Activated CD8-positive, alpha-beta T cell treated with anti-CD3 and anti-CD28 coated beads, Interleukin-2, amount 10 ng/mL, durations not matched to agents 7 days and 5 days (primary cell): ENCODE measurements at regions of chr1 and their contacts with region 1.

Region 1: GRCh38 chr1:156500797-156501499 is 373 bp upstream of the MEF2D start:
- DNase-seq: peak; percentile 95
- ATAC-seq: peak; percentile 73
- H3K4me3 Mint-ChIP-seq: peak overlapping the region; percentile 87
- H3K27ac Mint-ChIP-seq: peak overlapping the region; percentile 99
- H3K4me1 Mint-ChIP-seq: peaks cover 76% of the 10 kb centered on the region
- H3K27me3 Mint-ChIP-seq: no peaks in the 10 kb centered on the region

Region 2: DNA sequence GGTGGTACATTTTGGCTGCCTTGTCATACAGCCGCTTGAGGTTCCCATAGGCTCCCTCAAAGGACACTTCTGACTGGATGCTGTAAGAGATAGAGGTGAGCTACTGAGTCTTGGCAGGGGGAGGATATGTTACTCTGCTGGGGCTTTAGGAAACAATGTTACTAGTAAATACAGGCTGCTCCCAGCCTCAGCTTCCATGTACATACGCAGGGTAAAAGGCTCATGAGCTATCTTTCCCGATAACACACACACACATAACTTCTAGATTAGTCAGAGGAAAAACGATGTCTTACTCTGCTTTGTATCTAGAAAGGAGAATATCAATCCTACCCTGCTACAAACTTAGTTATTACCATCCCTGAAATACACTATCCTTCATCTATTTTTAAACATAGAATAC is 232.6 kb before region 1 on chr1:
- CTCF ChIA-PET with region 1: no interaction called
- POLR2A ChIA-PET with region 1: no interaction called
- DNase-seq: no peak
- ATAC-seq: no peak
- H3K4me3 Mint-ChIP-seq: no peak overlapping the region
- H3K27ac Mint-ChIP-seq: no peak overlapping the region
- H3K4me1 Mint-ChIP-seq: no peaks in the 10 kb centered on the region
- H3K27me3 Mint-ChIP-seq: no peaks in the 10 kb centered on the region

Region 3: GRCh38 chr1:156456622-156457465 is 44.1 kb before region 1 on chr1:
- CTCF ChIA-PET with region 1: interaction called, 13 read pairs
- POLR2A ChIA-PET with region 1: interaction called, 6 read pairs
- DNase-seq: peak; percentile 97
- ATAC-seq: peak; percentile 88
- H3K4me3 Mint-ChIP-seq: peak overlapping the region; percentile 84
- H3K27ac Mint-ChIP-seq: peak overlapping the region; percentile 95
- H3K4me1 Mint-ChIP-seq: peaks cover 18% of the 10 kb centered on the region
- H3K27me3 Mint-ChIP-seq: peaks cover 15% of the 10 kb centered on the region

Region 4: GRCh38 chr1:156489166-156489934 is 11.6 kb before region 1 on chr1:
- CTCF ChIA-PET with region 1: interaction called, 207 read pairs
- POLR2A ChIA-PET with region 1: interaction called, 143 read pairs
- DNase-seq: peak; percentile 55
- ATAC-seq: peak; percentile 53
- H3K4me3 Mint-ChIP-seq: peak overlapping the region; percentile 62
- H3K27ac Mint-ChIP-seq: peak overlapping the region; percentile 85
- H3K4me1 Mint-ChIP-seq: peaks cover 81% of the 10 kb centered on the region
- H3K27me3 Mint-ChIP-seq: no peaks in the 10 kb centered on the region

Region 5: GRCh38 chr1:156524481-156524869 is 23.5 kb after region 1 on chr1:
- CTCF ChIA-PET with region 1: interaction called, 46 read pairs
- POLR2A ChIA-PET with region 1: interaction called, 99 read pairs
- DNase-seq: peak; percentile 62
- ATAC-seq: peak; percentile 76
- H3K4me3 Mint-ChIP-seq: peak overlapping the region; percentile 60
- H3K27ac Mint-ChIP-seq: peak overlapping the region; percentile 92
- H3K4me1 Mint-ChIP-seq: peaks cover 48% of the 10 kb centered on the region
- H3K27me3 Mint-ChIP-seq: no peaks in the 10 kb centered on the region

Region 6: DNA sequence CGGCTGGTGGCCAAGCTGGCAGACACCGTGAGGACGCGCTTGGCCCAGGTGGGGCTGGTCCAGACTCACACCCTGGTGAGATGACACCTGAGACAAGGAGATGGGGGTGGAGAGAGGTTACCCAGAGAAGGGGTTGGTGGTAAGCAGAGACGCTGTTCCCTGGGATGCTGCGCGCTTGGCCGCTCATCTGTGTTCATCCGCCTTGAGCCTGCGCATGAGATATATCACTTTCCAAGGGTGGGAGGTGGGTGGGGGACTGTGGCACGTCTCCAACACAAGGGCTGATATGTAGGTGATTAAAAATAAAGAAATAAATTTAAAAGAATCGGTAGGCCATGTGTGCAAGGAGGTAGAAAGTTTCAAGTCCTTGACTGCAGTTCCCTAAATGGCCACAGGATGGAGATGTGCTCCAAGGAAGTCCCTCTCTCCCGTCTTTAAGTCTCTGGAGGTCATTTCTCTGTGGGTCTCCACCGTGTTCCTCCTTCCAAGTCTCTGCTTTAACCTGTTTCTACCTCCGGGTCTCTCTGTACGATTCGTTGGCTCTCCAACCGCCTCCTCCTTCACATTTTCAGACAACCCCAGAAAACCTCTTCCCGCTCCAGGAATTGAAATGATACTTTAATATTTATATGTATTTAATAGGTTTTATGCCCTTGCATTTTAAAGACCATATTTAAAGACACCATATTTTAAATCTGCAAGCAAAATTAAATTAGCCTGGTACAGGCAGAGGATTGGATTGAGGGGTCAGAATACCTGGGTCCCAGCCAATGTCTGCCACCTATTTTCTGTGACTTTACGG is 83.1 kb after region 1 on chr1:
- CTCF ChIA-PET with region 1: interaction called, 18 read pairs
- POLR2A ChIA-PET with region 1: interaction called, 27 read pairs
- DNase-seq: peak; percentile 88
- ATAC-seq: peak; percentile 17
- H3K4me3 Mint-ChIP-seq: peak overlapping the region; percentile 86
- H3K27ac Mint-ChIP-seq: peak overlapping the region; percentile 93
- H3K4me1 Mint-ChIP-seq: peaks cover 39% of the 10 kb centered on the region
- H3K27me3 Mint-ChIP-seq: no peaks in the 10 kb centered on the region

Region 7: GRCh38 chr1:156601122-156601830 is 100.3 kb after region 1 on chr1 and contains the start of gene GPATCH4:
- CTCF ChIA-PET with region 1: interaction called, 6 read pairs
- POLR2A ChIA-PET with region 1: interaction called, 12 read pairs
- DNase-seq: peak; percentile 92
- ATAC-seq: peak; percentile 84
- H3K4me3 Mint-ChIP-seq: peak within 1 kb of the TSS; percentile 98
- H3K27ac Mint-ChIP-seq: peak within 1 kb of the TSS; percentile 96
- H3K4me1 Mint-ChIP-seq: peaks cover 37% of the 10 kb centered on the region
- H3K27me3 Mint-ChIP-seq: no peaks in the 10 kb centered on the region
- total RNA-seq, gene GPATCH4: 43.9 to 44.7 TPM